ENCODE measurements at regions of chr1 and their contacts with region 1.

Region 1: DNA sequence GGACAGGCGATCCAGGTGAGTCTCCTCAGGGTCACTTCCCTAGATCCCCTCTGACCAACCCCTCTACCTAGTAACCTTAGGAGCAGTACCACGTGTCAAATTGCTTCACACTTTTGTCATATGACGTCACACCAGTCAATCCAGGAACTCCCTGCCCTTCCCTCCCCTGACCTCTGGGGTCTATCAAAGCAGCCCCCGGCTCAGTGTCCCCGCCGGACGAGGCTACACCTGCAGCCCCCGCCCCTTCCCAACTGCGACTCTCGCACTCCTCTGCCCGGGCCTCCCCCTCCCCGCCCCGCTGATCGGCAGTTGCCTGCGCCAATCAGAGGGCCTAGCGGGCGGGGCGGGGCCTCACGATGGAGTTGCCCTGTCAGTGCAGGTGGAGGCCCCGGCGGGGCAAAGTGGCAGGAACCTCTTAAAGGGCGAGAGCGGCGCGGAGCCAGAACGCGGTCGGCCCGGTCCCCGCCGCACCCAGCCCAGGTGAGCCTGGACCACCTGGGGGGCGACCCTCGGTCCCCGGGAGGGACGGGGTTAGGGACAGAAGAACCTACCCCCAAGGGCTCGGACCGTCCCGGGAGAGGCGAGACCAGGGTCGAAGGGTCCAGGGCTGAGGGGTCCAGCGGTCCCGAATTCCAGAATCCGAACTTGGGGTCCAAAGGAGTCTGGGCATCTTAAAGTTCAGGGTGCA is 27.5 kb upstream of the EPB41 start:
- DNase-seq: peak; percentile 72 to 92
- H3K4me3 ChIP-seq: peak overlapping the region; percentile 95
- H3K4me1 ChIP-seq: peaks cover 24% of the 10 kb centered on the region
- H3K27me3 ChIP-seq: no peaks in the 10 kb centered on the region

Region 2: GRCh38 chr1:28518000-28518744 is 368.7 kb before region 1 on chr1:
- in situ Hi-C with region 1: no loop called
- DNase-seq: peak; percentile 82 to 95
- H3K4me3 ChIP-seq: peak overlapping the region; percentile 58
- H3K4me1 ChIP-seq: peaks cover 21% of the 10 kb centered on the region
- H3K27me3 ChIP-seq: no peaks in the 10 kb centered on the region

Region 3: DNA sequence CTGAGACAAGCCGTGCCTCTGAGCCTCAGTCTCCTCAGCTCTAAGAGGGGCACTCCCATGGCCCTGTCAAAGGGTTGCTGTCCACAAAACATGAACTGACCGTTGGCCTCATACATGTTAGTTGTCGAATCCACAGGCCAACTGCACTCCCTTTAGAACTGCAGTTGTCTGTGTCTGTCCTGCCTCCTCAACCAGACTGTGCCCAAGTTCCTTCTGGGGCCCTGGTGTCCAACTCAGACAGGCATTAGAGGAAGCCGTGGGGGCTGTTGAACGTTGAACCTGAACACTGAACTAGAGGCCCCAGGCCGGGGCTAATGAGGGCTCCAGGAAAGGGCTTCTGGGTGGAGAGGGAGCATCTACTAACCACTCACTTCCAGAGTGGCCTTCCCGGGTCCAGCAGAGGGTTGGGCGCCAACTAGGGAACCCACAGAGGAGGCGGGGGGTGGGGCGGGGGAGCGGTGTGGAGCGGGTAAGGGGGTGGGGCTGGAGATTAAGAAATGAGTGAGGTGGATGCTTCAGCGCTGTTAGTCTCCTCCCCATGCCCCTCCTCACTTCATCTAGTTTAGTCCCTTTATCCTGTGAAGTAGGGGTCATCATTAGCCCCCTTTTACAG is 295.1 kb before region 1 on chr1 and contains the start of gene RAB42:
- in situ Hi-C with region 1: no loop called
- DNase-seq: peak; percentile 47 to 84
- H3K4me3 ChIP-seq: peak within 1 kb of the TSS; percentile 39
- H3K4me1 ChIP-seq: peaks cover 7% of the 10 kb centered on the region; the same call in 1 of the 2 replicates
- H3K27me3 ChIP-seq: no peaks in the 10 kb centered on the region

Region 4: GRCh38 chr1:28761189-28761588 is 125.7 kb before region 1 on chr1:
- in situ Hi-C with region 1: no loop called
- DNase-seq: no peak
- H3K4me3 ChIP-seq: no peak overlapping the region
- H3K4me1 ChIP-seq: peaks cover 6% of the 10 kb centered on the region
- H3K27me3 ChIP-seq: no peaks in the 10 kb centered on the region

Region 5: GRCh38 chr1:29033829-29034466 is 147.1 kb after region 1 on chr1:
- in situ Hi-C with region 1: loop called (anchors 5 kb)
- DNase-seq: peak in 1 of 2 experiments; percentile 67
- H3K4me3 ChIP-seq: no peak overlapping the region
- H3K4me1 ChIP-seq: no peaks in the 10 kb centered on the region
- H3K27me3 ChIP-seq: no peaks in the 10 kb centered on the region

Region 6: GRCh38 chr1:29197585-29197924 is 310.7 kb after region 1 on chr1:
- in situ Hi-C with region 1: loop called (anchors 5 kb)
- DNase-seq: peak; percentile 19 to 48
- H3K4me3 ChIP-seq: no peak overlapping the region
- H3K4me1 ChIP-seq: no peaks in the 10 kb centered on the region
- H3K27me3 ChIP-seq: no peaks in the 10 kb centered on the region

Region 7: DNA sequence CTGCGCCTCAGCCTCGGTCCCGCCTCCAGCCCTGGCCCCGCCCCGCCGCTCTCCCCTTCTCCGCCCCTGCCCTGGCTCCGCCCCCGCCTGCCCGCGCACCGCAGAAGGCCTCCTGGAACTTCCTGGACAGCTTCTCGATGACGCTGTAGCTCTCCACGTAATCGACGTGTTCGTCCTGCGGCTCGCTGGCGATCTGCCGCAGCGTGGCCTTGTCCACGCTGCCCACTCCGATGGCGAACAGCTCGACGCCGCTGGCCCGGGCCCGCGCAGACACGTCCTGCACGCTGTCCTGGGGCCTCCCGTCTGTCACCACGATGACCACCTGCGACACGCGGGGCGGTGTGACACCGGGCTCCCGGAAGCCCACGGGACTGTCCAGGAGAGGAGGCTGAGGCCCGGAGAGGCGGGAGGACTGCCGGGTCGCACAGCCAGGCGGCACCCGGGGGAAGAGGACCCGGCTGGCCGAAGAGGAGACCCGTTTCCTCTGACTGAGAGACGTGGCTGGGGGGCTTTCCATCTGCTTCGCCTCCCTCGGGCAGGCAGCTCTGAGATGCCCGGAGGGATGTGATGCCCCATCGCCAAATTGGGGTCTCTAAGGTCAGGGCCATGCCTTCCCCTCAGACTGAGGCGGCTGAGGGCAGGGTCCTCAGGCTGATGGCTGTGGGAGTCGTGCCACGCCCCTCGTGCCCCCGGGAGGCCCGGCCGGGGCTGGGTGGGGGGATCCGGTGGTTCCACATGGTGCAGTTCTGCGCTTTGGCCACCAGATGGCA is 1831.9 kb after region 1 on chr1:
- in situ Hi-C with region 1: loop called (anchors 25 kb)
- DNase-seq: peak; percentile 88 to 89
- H3K4me3 ChIP-seq: peak overlapping the region; percentile 49
- H3K4me1 ChIP-seq: 0 out of 2 replicates have a peak, but pooled peaks cover 2% of the 10 kb centered on the region
- H3K27me3 ChIP-seq: no peaks in the 10 kb centered on the region